Motor neuron (in vitro differentiated cells): ENCODE measurements at regions of chr2 and their contacts with region 1.

Region 1: GRCh38 chr2:20642055-20642971 is 8.6 kb downstream of the HS1BP3 start:
- ATAC-seq: peak; percentile 71 to 100 (median 82)
- H3K4me3 ChIP-seq: no peak overlapping the region
- H3K27ac ChIP-seq: peak overlapping the region in 1 of 2 donors; percentile 72
- H3K4me1 ChIP-seq: peaks cover 12 to 16% of the 10 kb centered on the region in 2 donors

Region 2: DNA sequence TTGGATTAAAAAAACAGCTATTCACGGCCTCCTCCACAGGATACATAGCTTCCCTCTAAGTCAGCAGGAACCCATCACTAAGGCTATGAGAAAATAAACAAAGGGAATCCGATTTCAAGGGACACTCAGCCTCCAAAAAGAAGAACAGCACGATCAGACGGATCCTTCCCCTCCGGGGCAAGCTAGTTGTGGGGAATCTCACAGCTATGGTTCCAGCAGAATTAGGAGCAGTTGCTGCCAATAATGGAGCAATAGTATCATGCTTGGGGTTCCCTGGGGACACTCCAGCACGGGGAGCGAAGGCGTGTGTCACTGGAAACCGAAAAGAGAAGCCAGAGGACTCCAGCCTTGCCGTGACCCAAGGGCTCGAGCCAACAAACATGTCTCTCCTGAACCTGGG is 903.6 kb before region 1 on chr2:
- in situ Hi-C with region 1: no loop called
- ATAC-seq: no peak
- H3K4me3 ChIP-seq: no peak overlapping the region
- H3K27ac ChIP-seq: no peak overlapping the region
- H3K4me1 ChIP-seq: peaks cover 0 to 2% of the 10 kb centered on the region in 2 donors

Region 3: DNA sequence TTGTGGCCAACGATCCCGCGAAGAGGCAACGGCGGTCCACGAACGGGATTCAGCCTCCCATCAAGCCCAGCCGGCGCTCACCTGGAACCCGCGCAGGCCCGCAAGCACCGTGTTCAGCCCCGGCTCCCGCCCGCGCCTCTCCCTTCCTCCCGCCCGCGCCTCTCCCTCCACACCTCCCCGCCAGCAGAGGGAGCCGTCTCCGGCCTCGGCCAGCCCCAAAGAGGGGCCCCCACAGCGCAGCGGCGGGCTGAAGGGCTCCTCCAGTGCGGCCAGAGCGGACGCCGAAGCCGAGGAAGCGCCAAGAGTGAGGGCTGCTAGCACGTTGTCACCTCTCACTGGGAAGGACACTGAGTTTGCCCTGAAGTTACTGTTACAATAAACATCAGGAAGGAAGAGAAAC is 535.6 kb before region 1 on chr2:
- in situ Hi-C with region 1: loop called in 1 of 9 experiments (anchors 25 kb)
- ATAC-seq: no peak
- H3K4me3 ChIP-seq: no peak overlapping the region
- H3K27ac ChIP-seq: no peak overlapping the region
- H3K4me1 ChIP-seq: peaks cover 8 to 21% of the 10 kb centered on the region in 2 donors

Region 4: GRCh38 chr2:20224716-20225293 is 417.5 kb before region 1 on chr2 and contains the start of gene SDC1:
- in situ Hi-C with region 1: no loop called
- ATAC-seq: peak; percentile 35 to 63 (median 56)
- H3K4me3 ChIP-seq: peak within 1 kb of the TSS; percentile 48 to 74 (median 52)
- H3K27ac ChIP-seq: peak within 1 kb of the TSS; percentile 14 to 45
- H3K4me1 ChIP-seq: peaks cover 20 to 24% of the 10 kb centered on the region in 2 donors
- total RNA-seq, gene SDC1: 1.7 to 26.2 (median 8.1) TPM

Region 5: DNA sequence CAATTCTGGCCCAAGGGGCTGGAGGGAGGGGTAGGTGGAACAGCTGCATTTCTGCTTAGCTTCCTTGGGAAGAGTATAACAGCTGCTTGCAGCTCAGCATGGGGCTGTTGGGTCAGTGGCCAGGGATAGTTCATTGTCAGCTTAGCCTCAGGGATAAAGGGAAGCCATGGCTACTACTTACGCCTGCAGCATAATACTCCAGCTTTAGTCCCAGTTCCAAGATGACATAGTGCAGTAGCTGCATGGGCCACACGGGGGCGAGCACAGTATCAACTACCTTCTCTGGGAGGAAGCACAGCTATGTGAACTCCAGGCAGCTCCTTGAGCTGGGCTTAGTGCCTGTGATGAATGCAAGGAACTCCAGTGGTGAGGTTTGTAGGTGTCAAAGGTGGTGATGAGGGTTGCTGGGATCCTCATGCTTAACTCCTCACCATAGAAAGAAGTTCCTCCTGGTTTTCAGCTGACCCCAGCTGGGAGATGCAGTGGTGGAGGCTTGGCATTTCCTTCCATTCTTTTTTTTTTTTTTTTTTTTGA is 230.9 kb before region 1 on chr2:
- in situ Hi-C with region 1: loop called in 1 of 9 experiments (anchors 10 kb)
- ATAC-seq: peak in 6 of 8 experiments; percentile 29 to 98 (median 64)
- H3K4me3 ChIP-seq: no peak overlapping the region
- H3K27ac ChIP-seq: no peak overlapping the region
- H3K4me1 ChIP-seq: no peaks in the 10 kb centered on the region

Region 6: DNA sequence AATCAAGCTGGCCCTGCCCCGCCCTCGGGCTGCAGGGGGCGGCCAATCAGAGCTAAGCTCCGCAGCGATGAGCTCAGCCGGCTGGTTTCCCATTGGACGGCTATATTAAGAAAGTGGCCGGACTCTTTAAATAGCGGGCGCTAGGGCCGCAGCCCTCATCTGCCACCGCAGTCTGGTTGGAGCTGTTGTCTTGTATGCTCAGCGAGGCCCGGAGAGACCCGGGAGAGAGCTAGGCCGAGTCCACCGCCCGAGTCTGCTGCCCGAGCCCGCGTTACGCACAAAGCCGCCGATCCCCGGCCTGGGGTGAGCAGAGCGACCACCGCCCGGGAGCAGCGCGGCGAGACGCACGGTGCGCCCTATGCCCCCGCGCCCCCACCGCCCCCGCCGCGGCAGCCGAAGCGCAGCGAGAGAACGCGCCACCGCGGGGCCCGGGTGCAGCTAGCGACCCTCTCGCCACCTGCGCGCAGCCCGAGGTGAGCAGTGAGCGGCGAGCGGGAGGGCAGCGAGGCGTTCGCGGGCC is 195.3 kb before region 1 on chr2 and contains the start of gene RHOB:
- in situ Hi-C with region 1: loop called (anchors 10 to 25 kb)
- ATAC-seq: peak; percentile 78 to 90 (median 86)
- H3K4me3 ChIP-seq: peak within 1 kb of the TSS; percentile 76 to 97 (median 83)
- H3K27ac ChIP-seq: peak within 1 kb of the TSS; percentile 97
- H3K4me1 ChIP-seq: peaks cover 21 to 25% of the 10 kb centered on the region in 2 donors
- total RNA-seq, gene RHOB: 12.1 to 280 (median 56.3) TPM

Region 7: GRCh38 chr2:20578895-20579825 is 63.2 kb before region 1 on chr2:
- in situ Hi-C with region 1: no loop called
- ATAC-seq: peak; percentile 86 to 97 (median 96)
- H3K4me3 ChIP-seq: no peak overlapping the region
- H3K27ac ChIP-seq: peak overlapping the region; percentile 68 to 73
- H3K4me1 ChIP-seq: peaks cover 14 to 26% of the 10 kb centered on the region in 2 donors

Region 8: GRCh38 chr2:21939967-21940366 is 1297.7 kb after region 1 on chr2:
- in situ Hi-C with region 1: no loop called
- ATAC-seq: peak in 4 of 8 experiments; percentile 40 to 71 (median 42)
- H3K4me3 ChIP-seq: no peak overlapping the region
- H3K27ac ChIP-seq: no peak overlapping the region
- H3K4me1 ChIP-seq: peaks cover 0 to 14% of the 10 kb centered on the region in 2 donors